ENCODE measurements at regions of chr12 and their contacts with region 1.

Region 1: DNA sequence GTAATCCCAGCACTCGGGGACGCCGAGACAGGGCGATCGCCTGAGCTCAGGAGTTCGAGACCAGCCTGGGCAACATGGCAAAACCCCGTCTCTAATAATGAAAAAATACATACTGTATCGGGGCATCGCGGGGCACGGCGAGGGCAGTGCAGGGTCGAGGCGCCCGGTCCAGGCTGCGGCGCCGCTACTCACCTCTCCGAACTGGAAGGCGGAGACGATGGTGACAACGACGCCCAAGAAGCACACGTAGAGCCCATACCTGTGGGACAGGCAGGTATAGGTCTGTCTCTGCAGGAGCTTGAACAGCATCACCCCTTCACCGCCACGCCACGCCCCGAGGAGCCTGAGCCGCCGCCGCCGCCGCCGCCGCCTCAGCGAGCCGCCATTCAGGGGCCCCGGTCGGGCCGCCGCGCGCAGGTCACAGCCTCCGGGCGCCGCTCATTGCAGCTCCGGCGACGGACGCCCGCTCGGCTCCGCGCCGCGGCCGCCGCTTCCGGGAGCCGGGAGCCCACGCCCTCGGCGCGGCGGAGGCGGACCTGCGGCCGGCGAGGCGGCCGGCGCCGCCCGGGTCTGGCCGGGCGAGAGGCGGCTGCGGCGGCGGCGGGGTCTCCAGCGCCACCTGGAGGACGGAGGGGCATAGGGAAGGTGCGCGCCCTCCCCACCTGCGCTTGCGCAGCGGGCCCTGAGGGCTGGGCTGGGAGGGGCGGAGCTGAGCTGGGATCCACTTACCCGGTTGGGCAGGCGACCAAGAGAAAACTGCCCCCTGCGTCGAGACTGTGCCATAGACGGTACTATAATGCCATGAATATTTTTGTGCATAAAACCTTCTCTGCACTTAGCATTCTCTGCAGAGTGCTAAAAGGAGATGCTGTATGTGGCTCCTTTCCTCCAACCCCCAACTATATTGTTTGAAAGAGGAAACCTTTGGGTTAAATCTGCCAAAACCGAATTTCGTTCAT is at the start of gene GNPTAB:
- DNase-seq: peak; percentile 93 to 98 (median 96)
- ATAC-seq: peak; percentile 89
- H3K4me3 ChIP-seq: peak within 1 kb of the TSS; percentile 92
- H3K4me3 Mint-ChIP-seq: peak within 1 kb of the TSS; percentile 94
- H3K27ac ChIP-seq: peak within 1 kb of the TSS; percentile 61 to 67
- H3K27ac Mint-ChIP-seq: peak within 1 kb of the TSS; percentile 97
- H3K4me1 ChIP-seq: peaks cover 34% of the 10 kb centered on the region
- H3K4me1 Mint-ChIP-seq: peaks cover 47% of the 10 kb centered on the region
- H3K27me3 ChIP-seq: no peaks in the 10 kb centered on the region
- H3K27me3 Mint-ChIP-seq: no peaks in the 10 kb centered on the region
- CTCF ChIP-seq: peak; percentile 60
- total RNA-seq, gene GNPTAB: 38.2 to 43.8 TPM

Region 2: GRCh38 chr12:101280006-101280505 is 550.6 kb before region 1 on chr12 and contains the start of gene UTP20:
- CTCF ChIA-PET with region 1: no interaction called
- POLR2A ChIA-PET with region 1: no interaction called
- intact Hi-C with region 1: loop called in 1 of 2 experiments (anchors 5 kb)
- DNase-seq: peak; percentile 89 to 96 (median 94)
- ATAC-seq: peak; percentile 100
- H3K4me3 ChIP-seq: peak within 1 kb of the TSS; percentile 72
- H3K4me3 Mint-ChIP-seq: peak within 1 kb of the TSS; percentile 97
- H3K27ac ChIP-seq: no peak within 1 kb of the TSS
- H3K27ac Mint-ChIP-seq: peak within 1 kb of the TSS; percentile 71
- H3K4me1 ChIP-seq: peaks cover 8% of the 10 kb centered on the region
- H3K4me1 Mint-ChIP-seq: peaks cover 25% of the 10 kb centered on the region
- H3K27me3 ChIP-seq: no peaks in the 10 kb centered on the region
- H3K27me3 Mint-ChIP-seq: peaks cover 13% of the 10 kb centered on the region
- CTCF ChIP-seq: no peak
- total RNA-seq, gene UTP20: 9.1 to 9.6 TPM

Region 3: GRCh38 chr12:101670007-101670687 is 160.5 kb before region 1 on chr12:
- CTCF ChIA-PET with region 1: no interaction called
- POLR2A ChIA-PET with region 1: interaction called, 3 read pairs
- intact Hi-C with region 1: loop called in 1 of 2 experiments (anchors 10 kb)
- DNase-seq: peak in 9 of 14 experiments; percentile 3 to 79 (median 41)
- ATAC-seq: peak; percentile 76
- H3K4me3 ChIP-seq: no peak overlapping the region
- H3K4me3 Mint-ChIP-seq: peak overlapping the region; percentile 49
- H3K27ac ChIP-seq: no peak overlapping the region
- H3K27ac Mint-ChIP-seq: peak overlapping the region; percentile 52
- H3K4me1 ChIP-seq: peaks cover 18% of the 10 kb centered on the region
- H3K4me1 Mint-ChIP-seq: peaks cover 26% of the 10 kb centered on the region
- H3K27me3 ChIP-seq: no peaks in the 10 kb centered on the region
- H3K27me3 Mint-ChIP-seq: peaks cover 4% of the 10 kb centered on the region
- CTCF ChIP-seq: peak; percentile 32

Region 4: GRCh38 chr12:101773650-101774162 is 56.9 kb before region 1 on chr12:
- CTCF ChIA-PET with region 1: interaction called, 38 read pairs
- POLR2A ChIA-PET with region 1: interaction called, 14 read pairs
- intact Hi-C with region 1: loop called (anchors 2 kb)
- DNase-seq: peak; percentile 52 to 85 (median 60)
- ATAC-seq: peak; percentile 97
- H3K4me3 ChIP-seq: no peak overlapping the region
- H3K4me3 Mint-ChIP-seq: no peak overlapping the region
- H3K27ac ChIP-seq: no peak overlapping the region
- H3K27ac Mint-ChIP-seq: no peak overlapping the region
- H3K4me1 ChIP-seq: no peaks in the 10 kb centered on the region
- H3K4me1 Mint-ChIP-seq: peaks cover 5% of the 10 kb centered on the region
- H3K27me3 ChIP-seq: no peaks in the 10 kb centered on the region
- H3K27me3 Mint-ChIP-seq: no peaks in the 10 kb centered on the region
- CTCF ChIP-seq: peak; percentile 92

Region 5: GRCh38 chr12:102119674-102120563 is 289.3 kb after region 1 on chr12 and contains the starts of genes NUP37 and PARPBP:
- CTCF ChIA-PET with region 1: no interaction called
- POLR2A ChIA-PET with region 1: no interaction called
- intact Hi-C with region 1: loop called in 1 of 2 experiments (anchors 10 kb)
- DNase-seq: peak; percentile 82 to 95 (median 89)
- ATAC-seq: peak; percentile 94
- H3K4me3 ChIP-seq: peak within 1 kb of the TSS; percentile 86
- H3K4me3 Mint-ChIP-seq: peak within 1 kb of the TSS; percentile 93
- H3K27ac ChIP-seq: peak within 1 kb of the TSS; percentile 55 to 84
- H3K27ac Mint-ChIP-seq: peak within 1 kb of the TSS; percentile 92
- H3K4me1 ChIP-seq: peaks cover 17% of the 10 kb centered on the region
- H3K4me1 Mint-ChIP-seq: peaks cover 42% of the 10 kb centered on the region
- H3K27me3 ChIP-seq: no peaks in the 10 kb centered on the region
- H3K27me3 Mint-ChIP-seq: no peaks in the 10 kb centered on the region
- CTCF ChIP-seq: no peak
- total RNA-seq, gene NUP37: 9.4 to 9.6 TPM
- total RNA-seq, gene PARPBP: 1.1 to 1.5 TPM

Region 6: DNA sequence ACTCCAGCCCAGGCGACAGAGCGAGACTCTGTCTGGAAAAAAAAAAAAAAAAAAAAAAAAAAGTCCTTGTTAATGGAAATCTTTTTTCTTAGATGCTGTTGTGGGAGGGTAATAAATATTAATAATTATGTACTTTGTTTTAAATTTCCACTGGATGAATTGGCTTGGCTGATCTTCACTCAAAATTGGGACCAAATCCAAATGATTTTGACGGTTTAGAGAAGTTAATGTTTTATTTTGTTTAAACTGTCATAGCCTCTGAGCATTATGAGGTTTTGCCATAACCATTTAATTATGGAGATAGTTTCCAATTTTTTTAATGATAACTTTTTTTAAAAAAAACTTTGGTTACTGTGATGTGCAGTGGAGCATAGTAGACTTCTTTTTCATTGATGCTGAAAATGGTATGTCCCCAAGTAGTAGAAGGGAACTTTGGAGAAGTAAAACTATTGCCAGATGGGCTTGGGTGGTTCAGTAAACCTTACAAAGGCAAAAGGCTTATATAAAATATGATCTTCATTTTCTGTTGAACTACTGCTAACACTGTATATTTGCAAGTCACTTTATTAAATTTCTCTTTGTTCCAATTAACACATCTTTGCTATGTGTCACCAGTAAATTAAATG is 370.9 kb after region 1 on chr12:
- CTCF ChIA-PET with region 1: no interaction called
- POLR2A ChIA-PET with region 1: no interaction called
- intact Hi-C with region 1: no loop called
- DNase-seq: no peak
- ATAC-seq: no peak
- H3K4me3 ChIP-seq: no peak overlapping the region
- H3K4me3 Mint-ChIP-seq: no peak overlapping the region
- H3K27ac ChIP-seq: no peak overlapping the region
- H3K27ac Mint-ChIP-seq: no peak overlapping the region
- H3K4me1 ChIP-seq: no peaks in the 10 kb centered on the region
- H3K4me1 Mint-ChIP-seq: no peaks in the 10 kb centered on the region
- H3K27me3 ChIP-seq: no peaks in the 10 kb centered on the region
- H3K27me3 Mint-ChIP-seq: no peaks in the 10 kb centered on the region
- CTCF ChIP-seq: no peak

Measured in CD4-positive, alpha-beta T cell (primary cell).